OCI-LY7 (cell line): ENCODE measurements at regions of chr4 and their contacts with region 1.

Region 1: GRCh38 chr4:70721747-70722146 is at the start of gene RUFY3:
- DNase-seq: no peak
- H3K4me3 ChIP-seq: no peak within 1 kb of the TSS
- H3K27ac ChIP-seq: no peak within 1 kb of the TSS
- H3K4me1 ChIP-seq: no peaks in the 10 kb centered on the region
- CTCF ChIP-seq: no peak
- total RNA-seq, gene RUFY3: 36.4 and 38.2 TPM in 2 replicates

Region 2: DNA sequence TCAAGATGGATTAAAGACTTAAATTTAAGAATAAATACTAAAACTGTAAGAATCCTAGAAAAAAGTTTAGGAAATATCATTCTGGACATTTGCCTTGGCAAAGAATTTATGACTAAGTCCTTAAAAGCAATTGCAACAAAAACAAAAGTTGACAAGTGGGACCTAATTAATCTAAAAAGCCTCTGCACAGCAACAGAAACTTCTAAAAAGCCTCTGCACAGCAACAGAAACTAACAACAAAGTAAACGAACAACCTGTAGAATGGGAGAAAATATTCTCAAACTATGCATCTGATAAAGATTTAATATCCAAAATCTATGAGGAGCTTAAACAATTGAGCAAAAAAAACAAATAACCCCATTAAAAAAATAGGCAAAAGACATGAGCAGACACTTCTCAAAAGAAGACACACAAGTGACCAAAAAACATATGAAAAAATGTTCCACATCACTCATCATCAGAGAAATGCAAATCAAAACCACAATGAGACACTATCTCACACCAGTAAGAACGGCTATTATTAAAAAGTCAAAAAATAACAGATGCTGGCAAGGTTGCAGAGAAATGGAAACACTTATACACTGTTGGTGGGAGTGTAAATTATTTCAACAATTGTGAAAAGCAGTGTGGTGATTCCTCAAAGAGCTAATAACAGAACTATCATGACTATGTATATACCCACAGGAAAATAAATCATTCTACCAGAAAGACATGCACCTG is 329.5 kb before region 1 on chr4:
- CTCF ChIA-PET with region 1: no interaction called
- POLR2A ChIA-PET with region 1: no interaction called
- intact Hi-C with region 1: no loop called
- DNase-seq: no peak
- H3K4me3 ChIP-seq: no peak overlapping the region
- H3K27ac ChIP-seq: no peak overlapping the region
- H3K4me1 ChIP-seq: peaks cover 4% of the 10 kb centered on the region
- CTCF ChIP-seq: no peak

Region 3: DNA sequence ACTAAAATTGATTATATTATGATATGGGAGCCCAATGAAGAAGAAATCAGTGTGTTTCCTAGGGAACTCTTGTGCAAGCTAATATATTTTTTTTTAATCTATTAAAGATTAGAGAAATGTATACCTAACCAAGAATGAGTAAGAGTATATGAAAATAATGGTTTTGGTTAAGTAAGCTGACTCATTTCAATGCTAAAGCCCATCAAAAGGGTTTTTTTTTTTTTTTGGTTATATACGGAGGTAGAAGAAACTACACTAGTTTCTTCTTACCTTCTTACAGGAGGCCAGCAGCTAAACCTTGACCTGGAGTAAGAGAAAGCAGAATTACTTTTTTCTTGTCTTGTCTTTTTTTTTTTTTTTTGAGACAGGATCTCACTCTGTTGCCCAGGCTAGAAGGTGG is 27.6 kb after region 1 on chr4:
- CTCF ChIA-PET with region 1: no interaction called
- POLR2A ChIA-PET with region 1: interaction called, 4 read pairs
- intact Hi-C with region 1: loop called (anchors 1 kb)
- DNase-seq: no peak
- H3K4me3 ChIP-seq: no peak overlapping the region
- H3K27ac ChIP-seq: no peak overlapping the region
- H3K4me1 ChIP-seq: peaks cover 45% of the 10 kb centered on the region
- CTCF ChIP-seq: no peak

Region 4: GRCh38 chr4:70969076-70969475 is 247.3 kb after region 1 on chr4:
- CTCF ChIA-PET with region 1: no interaction called
- POLR2A ChIA-PET with region 1: no interaction called
- intact Hi-C with region 1: no loop called
- DNase-seq: no peak
- H3K4me3 ChIP-seq: no peak overlapping the region
- H3K27ac ChIP-seq: no peak overlapping the region
- H3K4me1 ChIP-seq: peaks cover 9% of the 10 kb centered on the region
- CTCF ChIP-seq: no peak